Activated CD8-positive, alpha-beta T cell treated with anti-CD3 and anti-CD28 coated beads for 36 hours (primary cell): ENCODE measurements at regions of chr3 and their contacts with region 1.

Region 1: GRCh38 chr3:152230370-152230769 is 38.4 kb upstream of the MBNL1 start:
- DNase-seq: no peak
- ATAC-seq: no peak
- H3K4me3 Mint-ChIP-seq: no peak overlapping the region
- H3K27ac Mint-ChIP-seq: peak overlapping the region; percentile 1
- H3K4me1 Mint-ChIP-seq: peaks cover 62% of the 10 kb centered on the region
- H3K27me3 Mint-ChIP-seq: no peaks in the 10 kb centered on the region
- CTCF ChIP-seq: no peak

Region 2: DNA sequence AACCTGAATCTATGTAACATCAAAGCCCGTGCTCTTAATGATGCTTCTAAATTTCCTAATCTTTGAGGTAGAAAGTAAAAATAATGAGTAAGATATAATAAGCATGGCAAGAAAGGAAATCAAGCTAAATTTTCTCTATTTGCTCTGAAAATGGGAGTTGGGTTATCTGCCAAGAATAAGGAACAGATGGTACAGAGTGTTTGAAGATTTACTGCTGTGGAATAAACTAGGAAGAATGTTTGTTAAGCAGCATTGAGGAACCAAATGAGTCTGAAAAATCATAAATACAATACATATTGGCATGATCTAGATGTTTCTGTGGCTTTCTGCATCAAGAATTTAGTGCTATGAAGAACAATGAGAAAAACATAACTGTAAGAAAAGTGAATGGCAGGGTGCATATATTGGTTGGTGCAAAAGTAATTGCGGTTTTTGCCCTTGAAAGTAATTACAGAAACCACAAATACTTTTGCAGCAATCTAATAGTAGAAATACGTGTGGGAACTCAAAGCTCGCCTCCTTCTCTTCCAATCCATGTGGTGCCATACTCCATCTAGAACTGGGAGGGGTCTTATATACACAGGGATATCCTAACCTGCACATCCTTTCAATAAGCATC is 269.3 kb before region 1 on chr3:
- CTCF ChIA-PET with region 1: no interaction called
- POLR2A ChIA-PET with region 1: no interaction called
- intact Hi-C with region 1: no loop called
- DNase-seq: no peak
- ATAC-seq: no peak
- H3K4me3 Mint-ChIP-seq: no peak overlapping the region
- H3K27ac Mint-ChIP-seq: no peak overlapping the region
- H3K4me1 Mint-ChIP-seq: no peaks in the 10 kb centered on the region
- H3K27me3 Mint-ChIP-seq: peaks cover 2% of the 10 kb centered on the region
- CTCF ChIP-seq: no peak

Region 3: GRCh38 chr3:151999936-152000335 is 230.4 kb before region 1 on chr3:
- CTCF ChIA-PET with region 1: no interaction called
- POLR2A ChIA-PET with region 1: no interaction called
- intact Hi-C with region 1: no loop called
- DNase-seq: no peak
- ATAC-seq: no peak
- H3K4me3 Mint-ChIP-seq: no peak overlapping the region
- H3K27ac Mint-ChIP-seq: no peak overlapping the region
- H3K4me1 Mint-ChIP-seq: no peaks in the 10 kb centered on the region
- H3K27me3 Mint-ChIP-seq: no peaks in the 10 kb centered on the region
- CTCF ChIP-seq: no peak

Region 4: DNA sequence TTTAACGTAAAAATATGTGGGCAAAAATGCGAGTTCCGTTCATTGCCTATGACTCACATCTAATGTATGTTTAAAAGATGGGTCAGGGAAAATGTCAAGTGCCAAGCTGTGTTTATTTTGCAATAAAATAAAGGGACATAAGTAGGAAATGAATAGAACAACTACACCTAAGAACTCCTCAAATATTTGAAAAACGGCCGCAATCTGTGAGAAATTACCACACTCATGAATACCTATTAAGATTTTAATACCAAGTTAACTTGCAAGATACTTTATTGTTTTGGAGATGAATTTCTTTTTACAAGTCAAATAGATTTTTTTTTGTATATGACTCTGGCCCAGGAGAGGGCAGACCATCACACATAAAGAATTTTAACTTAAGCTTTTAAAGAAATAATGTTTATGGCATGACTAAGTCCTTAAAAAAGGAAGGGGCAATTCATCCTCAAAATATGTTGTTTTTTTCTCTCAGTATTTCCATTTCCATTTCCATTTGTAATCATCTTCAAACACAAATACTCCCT is 204.3 kb before region 1 on chr3:
- CTCF ChIA-PET with region 1: no interaction called
- POLR2A ChIA-PET with region 1: no interaction called
- intact Hi-C with region 1: no loop called
- DNase-seq: no peak
- ATAC-seq: no peak
- H3K4me3 Mint-ChIP-seq: no peak overlapping the region
- H3K27ac Mint-ChIP-seq: no peak overlapping the region
- H3K4me1 Mint-ChIP-seq: peaks cover 8% of the 10 kb centered on the region
- H3K27me3 Mint-ChIP-seq: peaks cover 2% of the 10 kb centered on the region
- CTCF ChIP-seq: no peak

Region 5: GRCh38 chr3:152219216-152219615 is 11.2 kb before region 1 on chr3:
- CTCF ChIA-PET with region 1: interaction called, 9 read pairs
- POLR2A ChIA-PET with region 1: interaction called, 11 read pairs
- intact Hi-C with region 1: no loop called
- DNase-seq: no peak
- ATAC-seq: no peak
- H3K4me3 Mint-ChIP-seq: peak overlapping the region; percentile 74
- H3K27ac Mint-ChIP-seq: peak overlapping the region; percentile 28
- H3K4me1 Mint-ChIP-seq: peaks cover 58% of the 10 kb centered on the region
- H3K27me3 Mint-ChIP-seq: no peaks in the 10 kb centered on the region
- CTCF ChIP-seq: no peak